K562 (cell line): ENCODE measurements at regions of chr3 and their contacts with region 1.

Region 1: GRCh38 chr3:196020373-196020772 is 61.5 kb downstream of the TFRC start:
- DNase-seq: no peak
- ATAC-seq: no peak
- H3K4me3 ChIP-seq: no peak overlapping the region
- H3K27ac ChIP-seq: no peak overlapping the region
- H3K4me1 ChIP-seq: peaks cover 6 to 7% of the 10 kb centered on the region in 2 experiments; a peak in 4 of 5 replicates
- H3K27me3 ChIP-seq: no peaks in the 10 kb centered on the region
- CTCF ChIP-seq: no peak
- EP300 ChIP-seq: no peak
- POLR2A ChIP-seq: no peak
- RAD21 ChIP-seq: no peak

Region 2: GRCh38 chr3:196202516-196202970 is 182.2 kb after region 1 on chr3:
- CTCF ChIA-PET with region 1: interaction called, 19 read pairs
- POLR2A ChIA-PET with region 1: no interaction called
- in situ Hi-C with region 1: loop called (anchors 5 kb)
- intact Hi-C with region 1: no loop called
- DNase-seq: no peak
- ATAC-seq: peak; percentile 33
- H3K4me3 ChIP-seq: no peak overlapping the region
- H3K27ac ChIP-seq: no peak overlapping the region
- H3K4me1 ChIP-seq: peaks cover 7 to 33% of the 10 kb centered on the region in 2 experiments; a peak in 4 of 5 replicates
- H3K27me3 ChIP-seq: no peaks in the 10 kb centered on the region
- CTCF ChIP-seq: no peak
- EP300 ChIP-seq: no peak
- POLR2A ChIP-seq: no peak
- RAD21 ChIP-seq: no peak

Region 3: GRCh38 chr3:196502775-196503195 is 482.4 kb after region 1 on chr3:
- CTCF ChIA-PET with region 1: no interaction called
- POLR2A ChIA-PET with region 1: no interaction called
- in situ Hi-C with region 1: no loop called
- intact Hi-C with region 1: loop called (anchors 5 kb)
- DNase-seq: peak; percentile 20 to 62 (median 26)
- ATAC-seq: peak; percentile 33
- H3K4me3 ChIP-seq: peak overlapping the region; percentile 91
- H3K27ac ChIP-seq: peak overlapping the region; percentile 93
- H3K4me1 ChIP-seq: peaks cover 10 to 14% of the 10 kb centered on the region in 2 experiments; a peak in 4 of 5 replicates
- H3K27me3 ChIP-seq: no peaks in the 10 kb centered on the region
- CTCF ChIP-seq: 0 out of 6 replicates have a peak, but pooled peaks of 1 of the 3 experiments have one; percentile 23
- EP300 ChIP-seq: no peak
- POLR2A ChIP-seq: no peak
- RAD21 ChIP-seq: no peak